B cell (primary cell): ENCODE measurements at regions of chr19 and their contacts with region 1.

Region 1: DNA sequence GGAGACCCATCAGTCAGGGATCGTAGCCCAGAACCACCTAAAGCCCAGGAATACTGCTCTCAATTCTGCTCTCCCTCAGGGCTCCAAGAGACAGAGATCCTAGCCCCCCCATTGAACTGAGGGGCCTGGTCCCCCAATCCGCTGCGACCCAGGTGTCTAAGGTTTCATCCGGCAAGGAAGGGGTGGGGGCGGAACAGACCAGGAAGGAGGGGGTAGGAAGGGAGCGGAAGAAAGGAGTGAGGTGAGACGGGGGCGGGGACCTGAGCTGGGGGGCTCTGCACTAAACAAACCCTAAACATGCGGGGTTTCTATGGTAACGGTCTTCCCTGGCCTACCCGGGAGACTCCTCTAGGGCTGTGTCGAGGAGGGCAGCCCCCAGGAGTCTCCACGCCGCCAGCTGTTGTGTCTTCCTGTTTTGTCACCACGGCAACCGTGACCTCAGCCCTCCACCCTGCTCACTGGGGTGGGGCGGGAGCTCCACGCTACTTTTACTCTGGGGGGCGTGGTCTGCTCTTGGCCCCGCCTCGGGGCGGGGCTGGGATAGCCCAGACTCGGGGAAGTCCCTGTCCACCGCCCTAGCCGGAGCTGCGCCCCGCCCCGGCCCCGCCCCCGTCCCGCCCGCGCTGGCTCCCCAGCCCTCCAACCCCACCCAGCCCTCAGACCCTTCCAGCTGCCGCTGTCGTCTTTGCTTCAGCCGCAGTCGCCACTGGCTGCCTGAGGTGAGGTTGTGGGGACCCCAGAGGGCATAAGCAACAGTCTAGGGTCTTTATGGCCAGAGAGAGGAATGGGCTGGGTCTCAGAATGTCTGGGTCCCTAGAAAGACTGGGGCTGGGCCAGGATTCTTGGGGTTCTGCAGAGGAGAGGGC is at the start of gene MYADM:
- DNase-seq: peak; percentile 100
- ATAC-seq: peak; percentile 77
- H3K4me3 ChIP-seq: peak within 1 kb of the TSS; percentile 82 to 100 (median 90)
- H3K4me3 Mint-ChIP-seq: peak within 1 kb of the TSS; percentile 92
- H3K27ac ChIP-seq: peak within 1 kb of the TSS; percentile 98 to 99
- H3K27ac Mint-ChIP-seq: peak within 1 kb of the TSS; percentile 99
- H3K4me1 ChIP-seq: peaks cover 33 to 59% of the 10 kb centered on the region in 2 donors
- H3K4me1 Mint-ChIP-seq: peaks cover 38% of the 10 kb centered on the region
- H3K27me3 ChIP-seq: no peaks in the 10 kb centered on the region
- H3K27me3 Mint-ChIP-seq: no peaks in the 10 kb centered on the region
- CTCF ChIP-seq: no peak
- total RNA-seq, gene MYADM: 18.5 and 18.9 TPM in 2 replicates

Region 2: GRCh38 chr19:53849237-53849676 is 18.2 kb before region 1 on chr19:
- CTCF ChIA-PET with region 1: interaction called, 5 read pairs
- POLR2A ChIA-PET with region 1: interaction called, 3 read pairs
- intact Hi-C with region 1: loop called (anchors 1 kb)
- DNase-seq: no peak
- ATAC-seq: no peak
- H3K4me3 ChIP-seq: no peak overlapping the region
- H3K4me3 Mint-ChIP-seq: no peak overlapping the region
- H3K27ac ChIP-seq: no peak overlapping the region
- H3K27ac Mint-ChIP-seq: no peak overlapping the region
- H3K4me1 ChIP-seq: peaks cover 12 to 23% of the 10 kb centered on the region in 2 donors
- H3K4me1 Mint-ChIP-seq: peaks cover 11% of the 10 kb centered on the region
- H3K27me3 ChIP-seq: peaks cover 0 to 29% (median 12%) of the 10 kb centered on the region in 4 experiments
- H3K27me3 Mint-ChIP-seq: peaks cover 32% of the 10 kb centered on the region
- CTCF ChIP-seq: no peak

Region 3: GRCh38 chr19:53894707-53895106 is 27.2 kb after region 1 on chr19:
- CTCF ChIA-PET with region 1: no interaction called
- POLR2A ChIA-PET with region 1: interaction called, 11 read pairs
- intact Hi-C with region 1: no loop called
- DNase-seq: no peak
- ATAC-seq: no peak
- H3K4me3 ChIP-seq: no peak overlapping the region
- H3K4me3 Mint-ChIP-seq: no peak overlapping the region
- H3K27ac ChIP-seq: no peak overlapping the region
- H3K27ac Mint-ChIP-seq: no peak overlapping the region
- H3K4me1 ChIP-seq: peaks cover 5% of the 10 kb centered on the region in 2 donors
- H3K4me1 Mint-ChIP-seq: peaks cover 2% of the 10 kb centered on the region
- H3K27me3 ChIP-seq: peaks cover 0 to 38% (median 14%) of the 10 kb centered on the region in 4 experiments
- H3K27me3 Mint-ChIP-seq: peaks cover 46% of the 10 kb centered on the region
- CTCF ChIP-seq: no peak

Region 4: GRCh38 chr19:54002495-54003315 is 135.2 kb after region 1 on chr19:
- CTCF ChIA-PET with region 1: no interaction called
- POLR2A ChIA-PET with region 1: no interaction called
- intact Hi-C with region 1: no loop called
- DNase-seq: no peak
- ATAC-seq: no peak
- H3K4me3 ChIP-seq: no peak overlapping the region
- H3K4me3 Mint-ChIP-seq: no peak overlapping the region
- H3K27ac ChIP-seq: no peak overlapping the region
- H3K27ac Mint-ChIP-seq: no peak overlapping the region
- H3K4me1 ChIP-seq: no peaks in the 10 kb centered on the region
- H3K4me1 Mint-ChIP-seq: no peaks in the 10 kb centered on the region
- H3K27me3 ChIP-seq: peaks cover 0 to 3% (median 0%) of the 10 kb centered on the region in 4 experiments
- H3K27me3 Mint-ChIP-seq: peaks cover 15% of the 10 kb centered on the region
- CTCF ChIP-seq: no peak

Region 5: GRCh38 chr19:54115109-54116063 is 247.9 kb after region 1 on chr19 and contains the starts of genes PRPF31 and TFPT:
- CTCF ChIA-PET with region 1: no interaction called
- POLR2A ChIA-PET with region 1: no interaction called
- intact Hi-C with region 1: loop called (anchors 5 kb)
- DNase-seq: peak; percentile 99
- ATAC-seq: peak; percentile 93
- H3K4me3 ChIP-seq: peak within 1 kb of the TSS; percentile 71 to 86 (median 81)
- H3K4me3 Mint-ChIP-seq: peak within 1 kb of the TSS; percentile 89
- H3K27ac ChIP-seq: peak within 1 kb of the TSS; percentile 76 to 78
- H3K27ac Mint-ChIP-seq: peak within 1 kb of the TSS; percentile 87
- H3K4me1 ChIP-seq: peaks cover 14 to 25% of the 10 kb centered on the region in 2 donors
- H3K4me1 Mint-ChIP-seq: peaks cover 31% of the 10 kb centered on the region
- H3K27me3 ChIP-seq: no peaks in the 10 kb centered on the region
- H3K27me3 Mint-ChIP-seq: no peaks in the 10 kb centered on the region
- CTCF ChIP-seq: no peak
- total RNA-seq, gene PRPF31: 65.4 and 66.2 TPM in 2 replicates
- total RNA-seq, gene TFPT: 10.4 and 12.7 TPM in 2 replicates